GM12878 (cell line): ENCODE measurements at regions of chr3 and their contacts with region 1.

Region 1: DNA sequence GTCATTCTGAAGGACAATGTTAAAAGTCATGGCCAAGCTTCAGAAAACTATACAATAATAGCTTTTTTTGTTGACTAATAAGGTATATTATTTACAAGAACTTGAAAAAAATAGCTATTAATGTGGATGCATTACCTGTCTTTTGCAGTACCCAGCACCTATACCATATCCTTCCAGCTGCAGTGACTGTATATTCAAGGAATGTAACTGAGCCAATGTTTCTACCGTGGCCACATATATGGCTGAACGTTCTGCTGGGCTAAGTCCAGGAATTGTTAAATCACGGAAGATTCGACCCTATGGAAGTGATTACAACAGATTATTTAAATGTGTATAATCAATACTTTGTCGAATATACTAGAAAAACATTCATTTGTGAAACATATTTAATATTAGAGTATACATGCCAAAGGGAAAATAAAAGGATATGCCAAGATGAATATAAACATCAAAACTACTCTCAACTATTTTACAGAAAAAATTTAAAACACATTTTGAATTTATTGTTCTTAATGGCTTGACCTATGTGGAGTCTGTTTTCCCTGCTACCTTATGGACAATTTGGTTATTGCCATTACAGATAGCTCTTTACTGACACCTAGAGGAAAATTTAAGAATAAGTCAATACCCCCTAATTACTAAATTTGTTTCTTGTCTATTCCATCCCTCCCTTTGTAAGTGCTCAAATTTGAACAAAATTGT is 17.6 kb downstream of the ACAD11 start:
- DNase-seq: no peak
- ATAC-seq: peak; percentile 85
- H3K4me3 ChIP-seq: no peak overlapping the region
- H3K27ac ChIP-seq: no peak overlapping the region
- H3K4me1 ChIP-seq: no peaks in the 10 kb centered on the region
- H3K27me3 ChIP-seq: no peaks in the 10 kb centered on the region
- CTCF ChIP-seq: peak; percentile 53 to 64 (median 55); a peak in 5 of 6 replicates
- EP300 ChIP-seq: no peak
- POLR2A ChIP-seq: no peak
- RAD21 ChIP-seq: peak; percentile 74

Region 2: GRCh38 chr3:132256989-132257388 is 385.0 kb before region 1 on chr3:
- CTCF ChIA-PET with region 1: no interaction called
- POLR2A ChIA-PET with region 1: no interaction called
- RAD21 ChIA-PET with region 1: no interaction called
- SMC1A ChIA-PET with region 1: no interaction called
- in situ Hi-C with region 1: no loop called
- intact Hi-C with region 1: no loop called
- DNase-seq: no peak
- ATAC-seq: no peak
- H3K4me3 ChIP-seq: no peak overlapping the region
- H3K27ac ChIP-seq: no peak overlapping the region
- H3K4me1 ChIP-seq: no peaks in the 10 kb centered on the region
- H3K27me3 ChIP-seq: no peaks in the 10 kb centered on the region; a peak in 2 of 4 replicates
- CTCF ChIP-seq: 0 out of 6 replicates have a peak, but pooled peaks of 1 of the 3 experiments have one; percentile 4
- EP300 ChIP-seq: no peak
- POLR2A ChIP-seq: no peak
- RAD21 ChIP-seq: no peak

Region 3: GRCh38 chr3:132352541-132353143 is 289.3 kb before region 1 on chr3:
- CTCF ChIA-PET with region 1: interaction called, 31 read pairs
- POLR2A ChIA-PET with region 1: no interaction called
- RAD21 ChIA-PET with region 1: interaction called, 3 read pairs
- SMC1A ChIA-PET with region 1: interaction called, 3 read pairs
- in situ Hi-C with region 1: loop called (anchors 5 kb)
- intact Hi-C with region 1: loop called (anchors 1 kb)
- DNase-seq: peak; percentile 45
- ATAC-seq: peak; percentile 93
- H3K4me3 ChIP-seq: no peak overlapping the region
- H3K27ac ChIP-seq: no peak overlapping the region
- H3K4me1 ChIP-seq: no peaks in the 10 kb centered on the region
- H3K27me3 ChIP-seq: no peaks in the 10 kb centered on the region; a peak in 1 of 4 replicates
- CTCF ChIP-seq: peak; percentile 84 to 90 (median 90)
- EP300 ChIP-seq: no peak
- POLR2A ChIP-seq: no peak
- RAD21 ChIP-seq: peak; percentile 94

Region 4: DNA sequence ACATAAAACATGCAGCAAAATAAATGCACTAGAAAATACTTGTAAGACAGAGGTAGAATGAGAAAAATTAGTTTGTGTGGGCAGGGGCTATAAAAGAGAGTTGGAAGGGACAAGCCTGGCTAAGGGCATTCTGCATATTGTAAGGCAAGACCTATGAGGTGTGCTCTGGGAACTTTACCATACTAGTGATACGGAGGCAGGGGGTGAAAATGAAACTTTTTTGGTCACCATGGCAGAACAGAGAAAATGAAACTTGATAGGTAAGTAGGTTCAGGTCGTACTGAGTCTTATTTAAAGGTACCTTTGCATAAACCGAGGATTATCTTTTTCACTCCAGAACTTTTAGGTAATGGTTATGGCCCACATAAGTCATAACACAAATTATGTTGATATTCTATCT is 119.6 kb before region 1 on chr3:
- CTCF ChIA-PET with region 1: interaction called, 12 read pairs
- POLR2A ChIA-PET with region 1: no interaction called
- RAD21 ChIA-PET with region 1: no interaction called
- SMC1A ChIA-PET with region 1: interaction called, 3 read pairs
- in situ Hi-C with region 1: no loop called
- intact Hi-C with region 1: no loop called
- DNase-seq: peak; percentile 34
- ATAC-seq: peak; percentile 89
- H3K4me3 ChIP-seq: no peak overlapping the region
- H3K27ac ChIP-seq: no peak overlapping the region
- H3K4me1 ChIP-seq: peaks cover 5% of the 10 kb centered on the region; the same call in 1 of the 2 replicates
- H3K27me3 ChIP-seq: no peaks in the 10 kb centered on the region
- CTCF ChIP-seq: no peak
- EP300 ChIP-seq: no peak
- POLR2A ChIP-seq: no peak
- RAD21 ChIP-seq: no peak

Region 5: DNA sequence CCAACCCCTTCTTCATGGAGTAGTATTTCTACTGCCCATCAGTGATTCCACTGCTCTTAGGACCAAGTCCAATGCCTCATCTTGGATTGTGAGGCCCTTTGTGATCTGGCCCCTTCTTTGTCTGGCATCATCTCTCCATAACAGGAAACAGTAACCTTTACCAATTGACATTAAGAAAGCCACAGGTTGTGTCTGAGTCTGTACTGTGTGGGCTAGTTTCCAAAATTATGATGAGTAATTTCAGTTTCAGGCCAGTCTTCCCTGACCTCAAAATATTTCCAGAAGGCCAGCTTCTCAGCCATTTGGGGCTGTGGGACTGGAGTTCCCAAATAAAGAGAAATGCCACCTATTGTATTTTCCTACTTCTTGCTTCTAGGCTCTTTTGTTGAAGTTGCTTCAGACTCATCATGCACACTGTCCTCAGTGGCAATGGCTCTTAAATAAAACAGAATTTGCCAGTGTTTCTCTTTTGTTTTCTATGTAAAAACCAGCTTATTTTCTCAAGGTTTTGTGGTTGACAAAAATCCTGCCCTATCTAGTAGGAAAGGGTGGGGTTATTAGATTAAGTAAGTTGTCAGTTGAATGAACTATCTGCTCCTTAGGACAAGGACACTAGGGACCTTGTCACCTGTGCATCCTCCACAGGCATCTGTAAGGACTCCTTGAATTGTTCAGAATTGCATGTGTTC is 92.0 kb before region 1 on chr3:
- CTCF ChIA-PET with region 1: interaction called, 19 read pairs
- POLR2A ChIA-PET with region 1: no interaction called
- RAD21 ChIA-PET with region 1: interaction called, 3 read pairs
- SMC1A ChIA-PET with region 1: interaction called, 3 read pairs
- in situ Hi-C with region 1: loop called (anchors 10 kb)
- intact Hi-C with region 1: no loop called
- DNase-seq: peak; percentile 9
- ATAC-seq: peak; percentile 86
- H3K4me3 ChIP-seq: no peak overlapping the region
- H3K27ac ChIP-seq: no peak overlapping the region
- H3K4me1 ChIP-seq: peaks cover 16% of the 10 kb centered on the region
- H3K27me3 ChIP-seq: no peaks in the 10 kb centered on the region
- CTCF ChIP-seq: no peak
- EP300 ChIP-seq: no peak
- POLR2A ChIP-seq: no peak
- RAD21 ChIP-seq: no peak

Region 6: DNA sequence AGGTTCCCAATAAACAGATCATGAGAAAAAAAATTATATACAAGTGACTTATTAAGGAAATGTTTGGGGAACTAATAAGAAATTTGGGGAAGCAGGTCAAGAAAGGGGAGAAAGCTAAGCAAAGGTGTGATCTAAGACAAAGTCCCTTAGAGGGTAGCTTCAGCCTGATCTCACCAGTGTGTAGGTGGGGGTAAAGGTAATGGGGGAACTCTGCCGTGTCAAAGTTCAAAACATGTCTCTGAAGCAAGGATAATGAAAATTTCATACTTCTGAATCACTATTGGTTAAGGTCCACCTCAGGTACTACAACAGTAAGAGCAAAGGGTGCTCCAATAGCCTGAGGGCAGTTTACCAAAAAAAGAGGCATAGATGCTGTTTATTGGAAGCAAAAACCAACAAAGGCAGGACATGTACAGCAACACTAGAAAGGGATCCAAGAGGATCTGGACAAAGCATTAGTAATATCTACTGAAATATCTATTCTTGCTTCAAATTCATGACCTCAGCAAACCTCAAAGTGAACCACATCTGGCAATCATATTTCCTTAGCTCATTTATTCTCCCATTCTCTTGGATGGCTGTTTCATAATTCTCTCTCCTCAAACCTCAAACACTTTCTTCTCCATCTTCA is 10.8 kb after region 1 on chr3:
- CTCF ChIA-PET with region 1: interaction called, 27 read pairs
- POLR2A ChIA-PET with region 1: interaction called, 4 read pairs
- RAD21 ChIA-PET with region 1: interaction called, 3 read pairs
- SMC1A ChIA-PET with region 1: interaction called, 7 read pairs
- in situ Hi-C with region 1: no loop called
- intact Hi-C with region 1: no loop called
- DNase-seq: no peak
- ATAC-seq: no peak
- H3K4me3 ChIP-seq: no peak overlapping the region
- H3K27ac ChIP-seq: no peak overlapping the region
- H3K4me1 ChIP-seq: no peaks in the 10 kb centered on the region
- H3K27me3 ChIP-seq: no peaks in the 10 kb centered on the region
- CTCF ChIP-seq: no peak
- EP300 ChIP-seq: no peak
- POLR2A ChIP-seq: no peak
- RAD21 ChIP-seq: no peak

Region 7: DNA sequence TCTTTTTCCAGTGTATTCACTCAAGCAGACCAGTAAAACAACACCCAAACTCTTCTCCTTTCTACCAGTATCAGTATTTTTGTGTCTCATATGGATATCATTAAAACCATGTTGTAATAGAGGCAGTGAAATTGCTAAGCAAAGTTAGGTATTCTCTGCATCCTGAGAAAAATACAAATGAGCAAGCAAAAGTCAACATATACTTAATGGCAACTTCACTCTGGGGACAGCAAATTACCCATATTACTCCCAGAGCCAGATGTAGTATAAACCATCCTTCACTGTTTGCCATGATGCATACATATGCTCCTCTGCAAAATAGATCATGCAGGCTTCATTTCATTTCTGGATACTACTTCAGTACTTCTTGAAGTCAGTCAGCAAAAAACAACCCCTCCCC is 40.2 kb after region 1 on chr3:
- CTCF ChIA-PET with region 1: interaction called, 10 read pairs
- POLR2A ChIA-PET with region 1: no interaction called
- RAD21 ChIA-PET with region 1: no interaction called
- SMC1A ChIA-PET with region 1: no interaction called
- in situ Hi-C with region 1: no loop called
- intact Hi-C with region 1: no loop called
- DNase-seq: no peak
- ATAC-seq: no peak
- H3K4me3 ChIP-seq: no peak overlapping the region
- H3K27ac ChIP-seq: no peak overlapping the region
- H3K4me1 ChIP-seq: no peaks in the 10 kb centered on the region
- H3K27me3 ChIP-seq: no peaks in the 10 kb centered on the region
- CTCF ChIP-seq: no peak
- EP300 ChIP-seq: no peak
- POLR2A ChIP-seq: no peak
- RAD21 ChIP-seq: no peak